Thyroid gland (tissue), 4 donors: ENCODE measurements at regions of chr12 and their contacts with region 1.

Region 1: DNA sequence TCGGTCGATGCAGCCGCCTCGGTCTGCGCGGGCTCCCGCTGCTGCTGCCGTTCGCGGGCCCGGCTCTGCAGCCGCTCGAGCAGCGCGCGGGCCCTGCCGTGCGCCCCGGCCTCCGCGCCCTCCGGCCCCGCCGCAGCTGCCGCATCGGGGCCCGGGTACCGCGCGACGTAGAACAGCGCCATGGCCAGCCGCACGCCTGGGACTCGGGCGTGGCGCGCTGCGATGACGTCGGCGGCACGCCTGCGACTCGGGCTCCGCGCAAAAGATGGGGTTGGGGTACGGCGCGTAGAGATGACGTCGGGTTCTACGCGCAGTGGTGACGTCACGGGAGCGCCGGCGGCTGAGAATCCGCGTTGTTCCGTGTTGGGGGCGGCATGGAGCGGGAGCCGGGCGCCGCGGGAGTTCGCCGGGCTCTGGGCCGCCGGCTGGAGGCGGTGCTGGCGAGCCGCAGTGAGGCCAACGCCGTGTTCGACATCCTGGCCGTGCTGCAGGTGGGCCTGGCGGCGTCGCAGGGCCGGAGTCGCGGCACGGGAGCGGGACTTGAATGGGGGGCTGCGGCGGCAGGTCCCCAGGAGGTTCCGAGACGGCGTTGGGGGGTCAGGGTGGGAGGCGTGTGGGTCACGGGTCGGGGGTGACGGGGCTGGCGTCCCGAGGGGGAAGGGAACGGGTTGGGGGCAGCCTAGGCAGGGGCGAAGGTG is at the starts of genes DDX51 and NOC4L:
- DNase-seq: peak; percentile 92 to 94
- H3K4me3 ChIP-seq: peak within 1 kb of the TSS; percentile 45 to 94 (median 92)
- H3K27ac ChIP-seq: peak within 1 kb of the TSS; percentile 74 to 83 (median 80)
- H3K4me1 ChIP-seq: peaks cover 18 to 21% of the 10 kb centered on the region in 2 donors
- H3K27me3 ChIP-seq: no peaks in the 10 kb centered on the region
- CTCF ChIP-seq: peak in 2 of 6 experiments; percentile 13 to 45
- POLR2A ChIP-seq: peak in 1 of 2 donors; percentile 68
- total RNA-seq, gene DDX51: 11.2 to 23.1 (median 13.7) TPM
- total RNA-seq, gene NOC4L: 9.3 to 22.4 (median 10.1) TPM

Region 2: DNA sequence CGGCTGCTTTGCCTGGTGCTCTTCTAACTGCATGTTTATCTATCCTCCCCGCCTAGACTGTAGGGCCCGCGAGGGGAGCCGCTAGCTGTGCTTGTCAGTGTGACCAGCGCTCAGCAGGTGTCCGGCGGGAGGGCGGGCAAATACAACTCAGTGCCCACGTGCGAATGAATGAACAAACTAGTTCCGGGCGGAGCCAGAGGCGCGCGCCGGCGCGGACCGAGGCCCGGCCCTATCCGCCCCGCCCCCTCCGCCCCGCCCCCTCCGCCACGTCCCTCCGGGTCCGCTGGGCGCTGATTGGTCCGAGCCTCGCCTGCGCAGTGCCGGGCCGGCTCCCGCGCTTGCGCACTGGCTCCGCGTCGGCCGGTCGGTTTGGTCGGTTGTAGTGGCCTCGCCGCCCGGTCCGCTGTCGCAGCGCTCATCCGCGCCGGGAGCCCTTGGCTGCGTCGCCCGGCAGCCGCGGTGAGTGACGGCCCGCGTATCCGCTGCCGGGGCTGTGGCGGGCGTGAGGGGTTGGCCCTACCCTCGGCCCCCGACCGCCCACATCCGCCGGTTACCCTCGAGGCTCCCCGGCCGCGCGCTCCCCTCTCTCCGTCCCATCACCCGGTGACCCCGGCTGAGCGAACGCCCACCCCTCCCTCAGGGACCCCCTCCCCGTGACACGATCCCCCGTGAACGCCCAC is 60.2 kb before region 1 on chr12:
- intact Hi-C with region 1: loop called (anchors 10 kb)
- DNase-seq: peak; percentile 87 to 94
- H3K4me3 ChIP-seq: peak overlapping the region; percentile 62 to 97 (median 65)
- H3K27ac ChIP-seq: peak overlapping the region in 2 of 3 donors; percentile 72 to 76
- H3K4me1 ChIP-seq: peaks cover 10 to 13% of the 10 kb centered on the region in 2 donors
- H3K27me3 ChIP-seq: no peaks in the 10 kb centered on the region
- CTCF ChIP-seq: no peak
- POLR2A ChIP-seq: peak in 1 of 2 donors; percentile 81

Region 3: GRCh38 chr12:132489602-132490239 is 345.5 kb after region 1 on chr12 and contains the start of gene FBRSL1:
- intact Hi-C with region 1: loop called (anchors 10 kb)
- DNase-seq: peak; percentile 83 to 85
- H3K4me3 ChIP-seq: peak within 1 kb of the TSS; percentile 44 to 86 (median 75)
- H3K27ac ChIP-seq: peak within 1 kb of the TSS in 2 of 3 donors; percentile 41 to 74
- H3K4me1 ChIP-seq: peaks cover 31 to 38% of the 10 kb centered on the region in 2 donors
- H3K27me3 ChIP-seq: no peaks in the 10 kb centered on the region
- CTCF ChIP-seq: no peak
- POLR2A ChIP-seq: peak in 1 of 2 donors; percentile 60
- total RNA-seq, gene FBRSL1: 9.2 to 19.7 (median 12.0) TPM